Endothelial cell of umbilical vein (primary cell): ENCODE measurements at regions of chr1 and their contacts with region 1.

Region 1: DNA sequence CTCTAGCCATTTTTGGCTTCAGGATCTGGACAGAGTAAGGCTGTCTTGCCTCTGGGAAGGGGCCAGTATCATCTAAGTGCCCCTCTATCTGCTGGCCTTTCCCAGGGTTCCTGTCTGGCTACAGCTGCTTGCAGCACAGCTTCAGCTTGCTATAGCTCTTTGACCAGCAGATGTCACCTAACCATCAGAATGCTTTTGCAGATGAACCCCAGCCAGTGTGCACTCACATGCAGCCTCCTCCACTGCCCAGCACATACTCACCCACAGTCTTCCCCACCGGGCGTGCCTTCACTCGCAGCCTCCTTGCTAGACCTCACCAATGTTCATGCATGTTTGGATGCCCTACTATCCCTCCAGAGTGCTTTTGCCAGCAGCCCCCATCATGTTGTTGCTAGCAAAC is 769.0 kb downstream of the BRINP3 start:
- DNase-seq: peak; percentile 3
- H3K4me3 ChIP-seq: no peak overlapping the region
- H3K27ac ChIP-seq: no peak overlapping the region
- H3K4me1 ChIP-seq: no peaks in the 10 kb centered on the region
- H3K27me3 ChIP-seq: no peaks in the 10 kb centered on the region
- CTCF ChIP-seq: no peak
- POLR2A ChIP-seq: no peak

Region 2: GRCh38 chr1:189409774-189410173 is 298.9 kb before region 1 on chr1:
- CTCF ChIA-PET with region 1: no interaction called
- POLR2A ChIA-PET with region 1: no interaction called
- dilution Hi-C with region 1: no loop called
- intact Hi-C with region 1: no loop called
- DNase-seq: no peak
- H3K4me3 ChIP-seq: no peak overlapping the region
- H3K27ac ChIP-seq: no peak overlapping the region
- H3K4me1 ChIP-seq: no peaks in the 10 kb centered on the region
- H3K27me3 ChIP-seq: no peaks in the 10 kb centered on the region
- CTCF ChIP-seq: no peak
- POLR2A ChIP-seq: no peak

Region 3: GRCh38 chr1:189921613-189922012 is 212.9 kb after region 1 on chr1:
- CTCF ChIA-PET with region 1: no interaction called
- POLR2A ChIA-PET with region 1: no interaction called
- dilution Hi-C with region 1: no loop called
- intact Hi-C with region 1: no loop called
- DNase-seq: no peak
- H3K4me3 ChIP-seq: no peak overlapping the region
- H3K27ac ChIP-seq: no peak overlapping the region
- H3K4me1 ChIP-seq: no peaks in the 10 kb centered on the region
- H3K27me3 ChIP-seq: no peaks in the 10 kb centered on the region
- CTCF ChIP-seq: no peak
- POLR2A ChIP-seq: no peak

Region 4: GRCh38 chr1:190320952-190321351 is 612.3 kb after region 1 on chr1:
- CTCF ChIA-PET with region 1: interaction called, 12 read pairs
- POLR2A ChIA-PET with region 1: no interaction called
- dilution Hi-C with region 1: no loop called
- intact Hi-C with region 1: no loop called
- DNase-seq: peak; percentile 29
- H3K4me3 ChIP-seq: no peak overlapping the region
- H3K27ac ChIP-seq: no peak overlapping the region
- H3K4me1 ChIP-seq: no peaks in the 10 kb centered on the region
- H3K27me3 ChIP-seq: no peaks in the 10 kb centered on the region
- CTCF ChIP-seq: peak in 1 of 2 donors; percentile 7
- POLR2A ChIP-seq: no peak